ENCODE measurements at regions of chrX and their contacts with region 1.

Region 1: GRCh38 chrX:41293269-41293668 is 40.7 kb upstream of the DDX3X start:
- DNase-seq: no peak
- ATAC-seq: peak; percentile 89
- H3K4me3 ChIP-seq: no peak overlapping the region
- H3K27ac ChIP-seq: no peak overlapping the region
- H3K4me1 ChIP-seq: no peaks in the 10 kb centered on the region
- H3K27me3 ChIP-seq: no peaks in the 10 kb centered on the region
- CTCF ChIP-seq: peak; percentile 61; the same call in 1 of the 2 replicates

Region 2: DNA sequence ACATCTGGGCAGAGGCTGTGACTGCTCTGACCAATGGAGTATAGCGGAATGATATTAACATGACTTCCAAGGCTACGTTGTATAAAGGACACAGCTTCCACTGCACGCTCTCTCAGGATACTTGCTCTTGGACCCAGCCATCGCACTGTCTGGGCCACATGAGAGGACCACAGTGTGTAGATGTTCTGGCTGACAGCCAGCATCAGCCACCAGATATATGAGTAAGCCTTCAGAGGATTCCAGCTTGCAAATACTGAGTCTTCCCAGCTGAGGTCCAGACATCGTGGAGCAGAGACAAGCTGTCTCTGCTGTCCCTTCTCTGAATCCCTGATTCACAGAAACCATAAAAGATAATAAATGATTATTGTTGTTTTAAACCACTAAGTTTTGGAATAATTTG is 354.8 kb before region 1 on chrX:
- CTCF ChIA-PET with region 1: interaction called, 10 read pairs
- POLR2A ChIA-PET with region 1: no interaction called
- in situ Hi-C with region 1: no loop called
- intact Hi-C with region 1: no loop called
- DNase-seq: no peak
- ATAC-seq: no peak
- H3K4me3 ChIP-seq: no peak overlapping the region
- H3K27ac ChIP-seq: no peak overlapping the region
- H3K4me1 ChIP-seq: no peaks in the 10 kb centered on the region
- H3K27me3 ChIP-seq: no peaks in the 10 kb centered on the region
- CTCF ChIP-seq: no peak

Region 3: GRCh38 chrX:41259516-41259915 is 33.8 kb before region 1 on chrX:
- CTCF ChIA-PET with region 1: no interaction called
- POLR2A ChIA-PET with region 1: no interaction called
- in situ Hi-C with region 1: no loop called
- intact Hi-C with region 1: no loop called
- DNase-seq: no peak
- ATAC-seq: no peak
- H3K4me3 ChIP-seq: no peak overlapping the region
- H3K27ac ChIP-seq: no peak overlapping the region
- H3K4me1 ChIP-seq: no peaks in the 10 kb centered on the region
- H3K27me3 ChIP-seq: no peaks in the 10 kb centered on the region
- CTCF ChIP-seq: no peak

Region 4: DNA sequence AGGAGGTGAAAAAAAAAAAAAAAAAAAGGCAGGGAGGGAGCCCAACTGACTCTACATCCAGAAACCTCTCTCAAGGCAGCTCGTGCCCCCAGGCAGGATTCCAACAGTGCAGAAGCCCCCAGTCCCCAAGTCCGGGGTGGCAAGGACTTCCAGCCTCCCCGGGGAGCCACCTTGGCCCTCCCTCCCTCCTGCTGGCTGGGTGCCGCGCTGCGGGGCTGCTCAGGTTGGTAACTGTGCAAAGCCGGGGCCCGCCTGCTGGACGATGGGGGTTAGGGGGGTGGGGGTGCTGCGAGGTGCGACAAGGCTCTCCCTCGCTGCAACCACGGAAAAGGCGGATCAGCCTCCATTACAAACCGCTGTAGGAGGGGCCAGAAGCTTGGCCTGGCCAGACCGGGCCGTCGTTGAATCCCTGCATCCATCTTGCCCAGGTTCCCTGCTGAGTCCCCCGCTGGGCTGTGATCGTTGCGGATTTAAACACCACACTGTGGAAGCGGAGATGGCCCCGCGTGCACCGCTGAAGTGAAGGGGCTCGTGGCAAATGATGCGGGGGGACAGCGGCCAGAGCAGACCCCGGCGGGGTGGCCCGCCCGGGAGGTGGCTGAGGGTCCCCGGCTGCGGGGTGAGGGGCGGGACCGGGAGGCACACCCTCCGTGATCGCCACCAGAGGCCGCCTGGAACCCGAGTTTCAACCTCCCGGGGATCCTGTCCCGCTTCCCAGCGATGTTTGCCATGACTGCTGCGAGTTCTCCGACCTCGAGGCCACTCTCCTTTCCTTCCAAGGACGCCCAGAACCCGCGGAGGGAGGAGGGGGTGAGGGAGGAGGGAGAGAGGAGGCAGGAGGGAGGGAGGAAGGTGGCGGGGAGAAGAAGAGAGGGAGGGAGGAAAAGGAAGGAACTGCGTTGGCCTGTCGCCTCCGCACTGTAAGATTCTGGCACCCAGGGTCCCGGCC is 17.3 kb before region 1 on chrX:
- CTCF ChIA-PET with region 1: interaction called, 6 read pairs
- POLR2A ChIA-PET with region 1: interaction called, 10 read pairs
- in situ Hi-C with region 1: no loop called
- intact Hi-C with region 1: no loop called
- DNase-seq: no peak
- ATAC-seq: peak; percentile 96
- H3K4me3 ChIP-seq: peak overlapping the region; percentile 45 to 49
- H3K27ac ChIP-seq: peak overlapping the region; percentile 79; the same call in 1 of the 2 replicates
- H3K4me1 ChIP-seq: no peaks in the 10 kb centered on the region; the same call in 1 of the 2 replicates
- H3K27me3 ChIP-seq: no peaks in the 10 kb centered on the region
- CTCF ChIP-seq: peak; percentile 73; the same call in 1 of the 2 replicates